Left ventricle myocardium superior (tissue), 1 donor: ENCODE measurements at regions of chr5 and their contacts with region 1.

Region 1: DNA sequence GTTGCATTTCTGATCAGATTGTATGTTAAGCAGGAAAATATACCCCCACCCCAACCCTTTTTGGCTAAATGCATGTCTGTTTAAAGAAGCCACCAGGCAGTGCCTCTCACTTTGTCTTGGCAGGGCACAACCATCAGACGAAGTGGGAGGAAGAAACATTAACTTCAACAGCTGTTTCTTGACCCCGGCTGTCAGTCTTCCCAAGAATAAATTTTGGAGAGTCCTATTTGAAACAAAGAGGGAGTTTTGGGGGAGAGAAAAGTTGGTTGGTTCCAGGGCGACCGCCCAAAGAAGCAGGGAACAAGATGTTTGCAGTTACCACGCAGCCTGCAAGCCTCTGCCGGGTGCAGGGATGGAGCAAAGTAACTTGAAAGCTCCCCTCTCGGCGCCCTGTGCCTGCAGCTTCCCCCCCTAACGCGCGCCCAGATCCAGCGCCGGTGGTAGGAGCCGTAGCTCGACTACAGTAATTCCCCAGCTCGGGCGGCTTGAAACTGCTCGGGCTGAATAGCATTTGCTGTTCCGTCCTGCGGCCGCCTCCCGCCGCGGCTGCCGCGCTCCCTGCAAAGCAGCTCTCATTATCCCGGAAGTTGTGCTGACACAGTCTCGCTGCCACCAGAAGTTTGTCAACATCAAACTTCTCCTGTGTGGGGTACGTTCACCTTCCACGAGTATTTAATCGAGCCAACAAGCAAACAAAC is 100.7 kb upstream of the SSBP2 start:
- DNase-seq: peak; percentile 99
- ATAC-seq: peak; percentile 95

Region 2: DNA sequence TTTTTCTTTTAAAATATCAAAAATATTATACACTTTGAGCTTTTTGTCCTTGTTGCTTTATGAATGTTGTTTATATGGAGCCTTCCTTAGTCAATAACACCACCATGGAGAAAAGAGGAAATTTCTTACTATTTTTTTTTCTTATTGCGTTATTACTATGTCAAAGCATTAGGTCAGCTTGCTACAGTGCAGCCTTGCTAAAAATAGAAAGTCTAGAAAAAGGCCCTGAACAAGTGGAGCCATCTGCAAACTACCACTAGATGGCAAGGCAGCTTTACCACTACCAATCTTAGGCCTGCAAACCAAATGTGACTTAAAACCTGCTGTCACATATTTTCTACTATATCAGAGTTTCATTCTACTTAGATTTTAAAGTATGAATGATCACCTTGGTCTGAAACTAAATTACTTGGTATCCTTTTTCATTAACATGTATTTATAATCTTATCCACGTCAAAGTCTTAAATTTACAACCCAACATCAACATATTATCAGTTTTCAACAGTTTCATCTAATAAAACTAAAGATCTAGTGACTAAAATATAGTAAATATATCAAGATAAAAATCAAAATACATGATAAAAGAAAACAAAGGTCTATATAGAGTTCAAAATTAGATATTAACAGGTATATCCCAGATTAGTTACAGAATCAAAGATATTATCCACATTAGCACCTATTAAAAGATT is 344.6 kb before region 1 on chr5:
- intact Hi-C with region 1: loop called (anchors 10 kb)
- DNase-seq: no peak
- ATAC-seq: peak; percentile 99

Region 3: DNA sequence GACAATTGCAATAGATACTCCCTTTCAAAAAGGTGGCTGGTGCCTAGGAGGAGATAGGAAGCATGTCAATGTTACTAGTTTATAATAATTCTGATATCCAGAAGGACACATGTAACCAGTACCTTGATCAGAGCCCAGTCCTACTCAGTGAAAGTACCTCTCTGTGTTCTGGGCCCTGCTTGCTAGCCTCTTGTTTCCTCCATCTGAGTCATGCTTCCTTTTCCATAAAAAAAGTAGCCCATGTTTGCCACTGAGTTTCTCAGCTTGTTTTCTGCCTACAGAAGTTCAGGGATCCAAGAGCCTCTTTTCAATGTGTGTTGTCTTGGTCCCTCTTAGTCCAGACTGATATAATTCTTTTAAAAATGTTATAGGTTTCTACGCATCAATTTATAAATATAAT is 249.7 kb before region 1 on chr5:
- intact Hi-C with region 1: no loop called
- DNase-seq: no peak
- ATAC-seq: no peak

Region 4: DNA sequence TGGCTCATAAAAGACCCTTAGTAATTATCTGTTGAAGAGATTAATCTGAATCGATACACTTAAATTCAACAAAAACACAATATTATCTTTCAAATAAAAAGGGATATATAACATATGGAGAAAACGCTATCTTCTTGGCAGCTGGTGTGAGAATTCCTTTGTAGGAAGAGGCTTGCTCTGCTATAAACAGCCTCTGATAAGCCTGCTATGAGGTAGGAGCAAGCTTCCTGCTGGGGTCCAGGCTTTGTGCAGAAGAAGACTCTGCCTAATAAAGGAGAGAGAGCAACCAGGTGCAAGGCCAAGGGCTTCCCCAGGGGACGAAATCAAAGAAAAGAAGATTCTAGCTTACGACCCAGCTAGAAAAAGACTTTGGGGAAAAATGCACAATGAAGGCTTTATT is 57.4 kb before region 1 on chr5:
- intact Hi-C with region 1: loop called (anchors 10 kb)
- DNase-seq: no peak
- ATAC-seq: peak; percentile 43

Region 5: GRCh38 chr5:81819556-81820317 is 31.9 kb before region 1 on chr5:
- intact Hi-C with region 1: no loop called
- DNase-seq: no peak
- ATAC-seq: no peak

Region 6: DNA sequence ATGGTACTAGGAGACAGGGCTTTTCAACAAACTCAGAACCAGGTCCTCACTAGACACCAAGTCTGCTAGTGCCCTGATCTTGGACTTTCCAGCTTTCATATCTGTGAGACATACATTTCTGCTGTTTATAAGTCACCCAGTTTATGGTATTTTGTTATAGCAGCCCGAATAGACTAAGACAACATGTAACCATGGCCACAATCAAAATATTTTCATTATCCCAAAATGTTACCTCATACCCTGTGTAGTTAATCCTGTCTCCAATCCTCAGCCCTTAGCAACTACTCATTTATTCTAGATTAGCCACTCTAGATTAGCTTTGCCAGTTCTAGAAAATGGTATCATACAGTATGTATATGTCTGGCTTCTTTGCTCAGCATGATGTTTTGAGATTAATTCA is 113.9 kb after region 1 on chr5:
- intact Hi-C with region 1: loop called (anchors 10 kb)
- DNase-seq: no peak
- ATAC-seq: no peak